Pancreas (tissue), 10 donors: ENCODE measurements at regions of chr17 and their contacts with region 1.

Region 1: DNA sequence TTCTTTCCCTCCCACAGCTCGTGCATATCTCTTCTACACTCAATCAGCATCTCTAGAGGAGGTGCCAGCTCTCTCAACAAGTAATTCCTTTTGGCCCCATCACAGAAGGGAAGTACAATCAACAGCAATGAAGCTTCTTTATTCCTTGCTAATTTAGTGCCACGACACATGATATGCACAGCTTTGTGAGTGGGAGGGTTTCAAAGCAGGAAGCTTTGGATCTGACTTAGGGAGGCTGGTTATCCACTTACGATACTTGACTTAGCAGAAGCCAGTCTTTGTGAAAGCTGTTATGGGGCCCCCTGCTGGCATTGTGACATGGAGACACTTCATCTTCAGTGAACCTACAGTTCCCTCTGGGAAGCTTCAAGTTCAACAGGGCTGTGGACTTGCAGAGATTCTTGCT is 81.0 kb downstream of the TMEM100 start:
- DNase-seq: peak in 5 of 6 donors; percentile 5 to 62 (median 36)
- ATAC-seq: peak in 3 of 4 donors; percentile 56 to 70 (median 57)
- H3K4me3 ChIP-seq: no peak overlapping the region
- H3K27ac ChIP-seq: no peak overlapping the region
- H3K4me1 ChIP-seq: no peaks in the 10 kb centered on the region
- H3K27me3 ChIP-seq: no peaks in the 10 kb centered on the region
- CTCF ChIP-seq: peak; percentile 22 to 48 (median 38)

Region 2: DNA sequence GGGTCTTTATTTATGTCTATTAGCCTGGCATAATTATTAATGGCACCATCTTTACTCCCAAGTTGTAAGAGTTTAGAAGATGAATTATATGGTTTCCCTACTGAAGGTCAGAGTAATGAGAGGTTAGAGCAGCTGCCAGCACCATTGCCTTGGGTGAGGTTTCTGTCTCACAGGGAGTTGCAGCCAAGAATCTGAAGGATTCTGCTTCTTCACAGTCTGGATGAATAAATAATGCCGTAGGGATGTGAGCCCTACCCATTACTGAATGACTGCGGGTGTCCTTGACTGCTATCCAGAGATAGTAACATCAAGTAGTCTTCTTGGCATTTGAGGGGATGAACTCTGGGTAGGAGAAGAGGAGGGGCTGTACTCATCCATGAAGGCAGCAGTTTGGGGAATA is 77.6 kb before region 1 on chr17:
- intact Hi-C with region 1: loop called in 1 of 3 experiments (anchors 2 kb)
- DNase-seq: no peak
- ATAC-seq: no peak
- H3K4me3 ChIP-seq: no peak overlapping the region
- H3K27ac ChIP-seq: no peak overlapping the region
- H3K4me1 ChIP-seq: no peaks in the 10 kb centered on the region
- H3K27me3 ChIP-seq: no peaks in the 10 kb centered on the region
- CTCF ChIP-seq: no peak